Activated CD8-positive, alpha-beta memory T cell treated with anti-CD3 and anti-CD28 coated beads, Interleukin-2, amount 10 ng/mL, durations not matched to agents 7 days and 5 days (primary cell): ENCODE measurements at regions of chr1 and their contacts with region 1.

Region 1: DNA sequence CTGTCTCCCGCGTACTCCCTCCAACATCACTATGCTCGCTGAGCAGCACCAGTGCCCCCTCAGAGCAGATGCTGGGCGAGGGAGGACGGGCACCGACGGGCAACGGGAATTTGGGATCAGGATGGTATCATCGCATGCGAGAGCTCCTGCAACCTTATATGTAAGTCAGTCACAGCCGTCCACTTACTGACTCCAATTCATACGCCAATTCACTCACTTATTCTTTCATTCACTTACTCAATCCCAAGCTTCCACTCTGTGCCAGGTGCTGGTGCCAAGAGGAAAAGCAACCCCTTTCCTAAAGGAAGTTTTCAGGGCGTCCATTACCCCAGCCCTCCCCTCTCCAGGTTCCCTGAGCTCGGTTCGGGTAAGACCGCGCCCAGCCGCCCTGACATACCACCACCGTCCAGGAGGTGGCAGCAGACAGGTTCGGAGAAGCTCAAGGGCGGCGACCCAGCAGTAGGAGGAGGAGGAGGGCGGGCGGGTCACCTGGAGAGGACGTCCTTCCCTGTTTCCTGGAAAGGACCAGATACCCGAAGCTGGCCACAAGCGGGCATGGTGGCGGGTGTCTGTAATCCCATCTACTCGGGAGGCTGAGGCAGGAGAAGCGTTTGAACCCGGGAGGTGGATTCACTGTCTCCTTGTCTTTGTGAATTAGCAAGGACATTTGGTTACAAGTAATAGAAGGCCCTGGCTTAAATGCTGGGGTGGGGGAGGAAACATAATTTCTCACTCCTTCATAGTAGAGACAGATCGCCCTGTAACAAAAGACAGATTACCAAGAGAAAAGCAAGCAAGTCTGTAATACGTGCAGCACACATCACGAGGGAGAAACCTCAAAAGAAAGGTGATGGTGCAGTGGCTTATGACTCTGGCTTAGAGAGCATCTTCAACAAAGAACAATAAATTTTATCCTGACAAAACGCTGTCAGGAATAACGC is 7.6 kb upstream of the IL22RA1 start:
- DNase-seq: peak; percentile 93
- ATAC-seq: peak; percentile 97
- H3K4me3 Mint-ChIP-seq: peak overlapping the region; percentile 54
- H3K27ac Mint-ChIP-seq: no peak overlapping the region
- H3K4me1 Mint-ChIP-seq: peaks cover 20% of the 10 kb centered on the region
- H3K27me3 Mint-ChIP-seq: peaks cover 40% of the 10 kb centered on the region

Region 2: GRCh38 chr1:24062221-24062620 is 88.3 kb before region 1 on chr1:
- CTCF ChIA-PET with region 1: no interaction called
- DNase-seq: no peak
- ATAC-seq: no peak
- H3K4me3 Mint-ChIP-seq: no peak overlapping the region
- H3K27ac Mint-ChIP-seq: no peak overlapping the region
- H3K4me1 Mint-ChIP-seq: no peaks in the 10 kb centered on the region
- H3K27me3 Mint-ChIP-seq: peaks cover 2% of the 10 kb centered on the region

Region 3: GRCh38 chr1:24126018-24126671 is 24.4 kb before region 1 on chr1:
- CTCF ChIA-PET with region 1: interaction called, 10 read pairs
- DNase-seq: no peak
- ATAC-seq: no peak
- H3K4me3 Mint-ChIP-seq: no peak overlapping the region
- H3K27ac Mint-ChIP-seq: no peak overlapping the region
- H3K4me1 Mint-ChIP-seq: no peaks in the 10 kb centered on the region
- H3K27me3 Mint-ChIP-seq: no peaks in the 10 kb centered on the region

Region 4: DNA sequence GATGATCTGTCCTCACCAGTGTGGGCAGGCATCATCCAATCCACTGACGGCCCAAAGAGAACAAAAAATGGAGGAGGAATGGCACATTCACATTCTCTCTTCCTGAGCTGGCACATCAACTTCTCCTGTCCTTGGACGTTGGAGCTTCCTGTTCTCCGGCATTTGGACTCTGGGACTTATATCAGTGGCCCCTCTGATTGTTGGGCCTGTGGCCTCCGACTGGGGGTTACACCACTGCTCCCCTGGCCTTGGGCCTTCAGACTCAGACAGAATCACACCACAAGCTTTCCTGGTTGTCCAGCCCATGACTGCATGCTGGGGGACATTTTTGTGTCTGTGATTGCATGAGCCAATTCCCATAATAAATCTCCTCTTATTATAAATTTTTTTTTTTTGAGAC is 16.5 kb after region 1 on chr1:
- CTCF ChIA-PET with region 1: interaction called, 12 read pairs
- DNase-seq: no peak
- ATAC-seq: no peak
- H3K4me3 Mint-ChIP-seq: no peak overlapping the region
- H3K27ac Mint-ChIP-seq: no peak overlapping the region
- H3K4me1 Mint-ChIP-seq: no peaks in the 10 kb centered on the region
- H3K27me3 Mint-ChIP-seq: no peaks in the 10 kb centered on the region

Region 5: DNA sequence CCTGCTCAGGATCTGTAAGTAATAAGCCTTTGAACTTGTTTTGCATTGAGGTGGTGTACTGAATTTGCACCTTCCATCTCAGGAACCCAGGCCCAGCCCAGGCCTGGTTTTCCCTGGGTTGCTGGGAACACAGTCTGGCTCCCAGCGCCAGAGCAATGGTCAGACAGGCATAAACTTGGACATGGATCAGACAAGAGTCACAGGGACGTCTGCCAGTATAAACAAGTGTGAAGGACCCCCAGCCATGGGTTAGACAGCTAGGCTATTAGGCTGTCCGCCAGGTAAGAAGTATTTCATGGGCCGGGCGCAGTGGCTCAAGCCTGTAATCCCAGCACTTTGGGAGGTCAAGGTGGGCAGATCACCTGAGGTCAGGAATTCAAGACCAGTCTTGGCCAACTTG is 31.1 kb after region 1 on chr1:
- CTCF ChIA-PET with region 1: interaction called, 93 read pairs
- DNase-seq: no peak
- ATAC-seq: no peak
- H3K4me3 Mint-ChIP-seq: no peak overlapping the region
- H3K27ac Mint-ChIP-seq: no peak overlapping the region
- H3K4me1 Mint-ChIP-seq: peaks cover 7% of the 10 kb centered on the region
- H3K27me3 Mint-ChIP-seq: no peaks in the 10 kb centered on the region

Region 6: GRCh38 chr1:24186993-24187805 is 36.7 kb after region 1 on chr1 and contains the start of gene IFNLR1:
- CTCF ChIA-PET with region 1: interaction called, 93 read pairs
- DNase-seq: peak; percentile 85
- ATAC-seq: peak; percentile 81
- H3K4me3 Mint-ChIP-seq: peak within 1 kb of the TSS; percentile 72
- H3K27ac Mint-ChIP-seq: peak within 1 kb of the TSS; percentile 65
- H3K4me1 Mint-ChIP-seq: peaks cover 49% of the 10 kb centered on the region
- H3K27me3 Mint-ChIP-seq: no peaks in the 10 kb centered on the region
- total RNA-seq, gene IFNLR1: 6.8 to 6.9 TPM

Region 7: GRCh38 chr1:24385160-24385940 is 234.8 kb after region 1 on chr1:
- CTCF ChIA-PET with region 1: interaction called, 99 read pairs
- DNase-seq: peak; percentile 64
- ATAC-seq: peak; percentile 52
- H3K4me3 Mint-ChIP-seq: no peak overlapping the region
- H3K27ac Mint-ChIP-seq: peak overlapping the region; percentile 17
- H3K4me1 Mint-ChIP-seq: peaks cover 35% of the 10 kb centered on the region
- H3K27me3 Mint-ChIP-seq: no peaks in the 10 kb centered on the region